ENCODE measurements at regions of chr14 and their contacts with region 1.

Region 1: DNA sequence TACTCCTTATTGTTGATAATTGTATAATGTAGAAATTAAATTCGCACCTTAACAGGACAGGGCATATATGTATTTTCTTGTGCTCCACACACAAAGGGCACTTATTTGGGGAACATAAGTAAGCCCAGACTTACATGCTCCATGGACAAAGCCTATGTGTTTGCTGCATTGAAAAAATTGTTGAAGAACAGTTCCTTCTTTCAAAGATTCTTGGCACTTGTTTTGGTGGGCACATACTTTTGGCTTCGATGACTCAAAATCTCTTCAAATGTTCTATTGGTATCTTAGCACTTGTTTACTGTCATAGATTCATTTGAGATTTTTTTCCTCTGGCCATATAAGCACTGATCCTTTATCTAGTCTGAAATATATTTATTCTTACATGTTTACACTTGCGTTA is 1.4 kb upstream of the MAP4K5 start:
- DNase-seq: no peak
- H3K4me3 ChIP-seq: peak overlapping the region in 2 of 3 donors; percentile 98
- H3K27ac ChIP-seq: peak overlapping the region; percentile 97 to 99
- H3K4me1 ChIP-seq: peaks cover 0 to 16% of the 10 kb centered on the region in 2 donors
- H3K27me3 ChIP-seq: no peaks in the 10 kb centered on the region
- CTCF ChIP-seq: no peak
- POLR2A ChIP-seq: no peak

Region 2: GRCh38 chr14:49692811-49693734 is 840.7 kb before region 1 on chr14 and contains the start of gene KLHDC1:
- intact Hi-C with region 1: no loop called
- DNase-seq: peak; percentile 61 to 79
- H3K4me3 ChIP-seq: peak within 1 kb of the TSS; percentile 68 to 86 (median 76)
- H3K27ac ChIP-seq: peak within 1 kb of the TSS; percentile 96 to 97
- H3K4me1 ChIP-seq: no peaks in the 10 kb centered on the region
- H3K27me3 ChIP-seq: no peaks in the 10 kb centered on the region
- CTCF ChIP-seq: peak in 1 of 3 donors; percentile 6
- POLR2A ChIP-seq: peak; percentile 86
- total RNA-seq, gene KLHDC1: 7.8 to 13.5 (median 11.8) TPM

Region 3: DNA sequence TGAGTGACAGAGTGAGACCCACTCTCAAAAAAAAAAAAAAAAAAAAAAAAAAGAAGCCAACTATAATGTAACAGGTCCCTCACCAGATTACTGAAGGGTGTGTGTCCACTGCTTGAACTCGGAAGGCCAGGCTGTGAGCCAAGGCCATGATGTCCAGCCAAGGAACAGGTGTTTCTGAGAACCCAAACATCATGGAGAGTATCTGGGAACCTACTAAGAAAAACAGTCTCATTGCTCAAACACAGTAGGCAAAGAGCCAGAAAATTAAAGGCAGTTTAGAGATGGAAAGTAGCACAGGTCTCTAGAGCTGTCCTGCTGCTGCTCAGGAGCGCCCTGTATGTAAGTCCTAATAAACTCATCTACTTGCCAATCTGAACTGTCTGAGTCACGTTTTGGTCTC is 11.1 kb after region 1 on chr14:
- intact Hi-C with region 1: loop called (anchors 1 kb)
- DNase-seq: peak in 1 of 2 donors; percentile 68
- H3K4me3 ChIP-seq: no peak overlapping the region
- H3K27ac ChIP-seq: peak overlapping the region; percentile 29 to 74
- H3K4me1 ChIP-seq: peaks cover 0 to 3% of the 10 kb centered on the region in 2 donors
- H3K27me3 ChIP-seq: no peaks in the 10 kb centered on the region
- CTCF ChIP-seq: no peak
- POLR2A ChIP-seq: no peak

Measured in breast epithelium (tissue), 4 donors.